ENCODE measurements at regions of chr1 and their contacts with region 1.

Region 1: DNA sequence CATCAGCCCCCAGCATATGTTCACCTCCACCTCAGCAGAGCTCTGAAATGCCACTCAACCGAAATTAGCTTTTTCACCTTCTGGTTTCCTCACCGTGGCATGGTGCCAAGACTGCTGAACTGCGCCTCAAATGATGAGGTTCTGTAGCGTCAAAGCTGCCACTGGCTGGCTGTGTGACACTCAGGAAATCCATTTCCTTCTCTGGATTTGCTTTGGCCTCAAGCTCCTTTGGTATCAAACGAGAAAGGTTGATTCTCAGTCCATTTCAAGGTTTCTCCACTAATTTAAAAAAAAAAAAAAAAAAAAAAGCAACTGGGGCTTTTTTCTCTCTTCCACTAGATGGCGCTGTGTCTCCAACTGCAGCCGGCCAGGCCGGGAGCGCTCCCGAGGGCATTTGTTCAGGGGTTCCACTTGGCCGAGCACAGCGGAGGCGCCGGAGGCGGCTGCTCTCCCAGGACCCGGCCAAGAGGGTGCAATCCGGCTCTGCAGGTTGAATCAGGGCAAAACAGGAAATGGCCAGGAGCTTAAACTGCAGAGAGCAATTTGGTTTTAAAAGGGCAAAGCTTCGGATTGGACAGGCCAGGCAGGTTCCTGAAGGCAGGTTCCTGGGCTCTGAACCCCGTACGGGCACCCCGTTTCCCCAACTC is 26.5 kb upstream of the PLA2G2C start:
- DNase-seq: peak; percentile 84
- H3K27ac ChIP-seq: no peak overlapping the region; the same call in 1 of the 2 replicates
- CTCF ChIP-seq: peak; percentile 83

Region 2: GRCh38 chr1:20095564-20096434 is 117.0 kb before region 1 on chr1:
- CTCF ChIA-PET with region 1: interaction called, 10 read pairs
- POLR2A ChIA-PET with region 1: no interaction called
- DNase-seq: no peak
- H3K27ac ChIP-seq: no peak overlapping the region
- CTCF ChIP-seq: no peak

Region 3: DNA sequence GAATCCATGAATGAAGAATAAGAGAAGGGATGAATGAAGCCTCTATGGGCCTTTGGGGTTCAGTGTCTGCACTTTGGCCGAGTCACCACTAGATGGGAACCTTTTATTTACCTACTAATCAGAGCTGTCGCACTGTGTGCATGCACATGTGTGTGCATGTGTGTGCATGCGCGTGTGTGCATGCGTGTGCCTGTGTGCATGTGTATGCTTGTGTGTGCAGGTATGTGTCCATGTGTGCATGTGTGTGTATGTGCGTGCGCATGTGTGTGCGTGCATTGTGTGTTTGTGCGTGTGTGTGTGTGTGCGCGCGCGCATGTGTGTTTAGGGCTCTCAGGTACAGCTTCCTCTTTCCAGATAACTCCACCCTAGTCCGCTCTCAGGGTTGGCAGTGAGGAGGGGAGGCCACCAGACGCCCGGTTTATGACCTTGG is 47.3 kb before region 1 on chr1:
- CTCF ChIA-PET with region 1: interaction called, 16 read pairs
- POLR2A ChIA-PET with region 1: no interaction called
- DNase-seq: peak; percentile 40
- H3K27ac ChIP-seq: no peak overlapping the region
- CTCF ChIP-seq: no peak

Region 4: DNA sequence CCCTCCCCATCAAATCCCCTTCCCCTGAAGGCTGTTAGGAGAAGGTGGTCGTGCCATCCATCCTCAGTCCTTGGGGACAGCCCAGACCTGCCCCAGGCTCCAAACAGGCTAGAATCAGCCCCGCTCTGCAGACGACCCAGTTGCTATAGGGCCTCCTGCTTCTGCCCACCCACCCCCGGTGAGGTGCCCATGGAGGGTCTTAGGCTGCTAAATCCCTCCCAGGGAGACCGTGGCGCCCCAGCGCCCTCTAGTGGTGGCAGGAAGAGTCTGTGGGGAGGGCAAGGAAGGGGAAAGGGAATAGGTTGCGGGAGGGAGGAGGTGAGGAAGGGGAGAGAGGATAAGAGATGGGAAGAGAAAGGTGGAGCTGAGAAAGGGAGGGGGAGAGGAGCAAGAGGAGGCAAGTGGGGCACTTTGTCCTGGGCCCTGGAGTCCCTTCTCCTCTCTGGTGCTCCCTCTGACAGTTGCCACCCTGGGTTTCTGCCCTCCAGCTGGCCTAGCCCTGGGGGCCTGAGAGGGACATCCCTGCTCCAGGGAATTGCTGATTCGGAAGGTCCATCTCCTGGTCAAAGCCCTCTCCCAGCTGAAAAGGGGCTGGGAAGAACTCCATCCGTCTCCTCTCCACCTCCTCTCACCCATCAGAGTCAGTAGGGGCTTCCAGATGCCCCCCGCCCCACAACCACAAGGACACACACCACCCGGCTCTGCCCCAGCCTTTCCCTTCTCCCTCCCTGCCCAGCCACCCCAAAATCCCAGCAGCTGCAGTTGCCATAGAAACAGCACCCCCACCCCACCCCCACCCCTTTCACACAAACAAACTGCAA is 217.8 kb after region 1 on chr1:
- CTCF ChIA-PET with region 1: interaction called, 16 read pairs
- POLR2A ChIA-PET with region 1: interaction called, 5 read pairs
- DNase-seq: peak; percentile 54
- H3K27ac ChIP-seq: no peak overlapping the region
- CTCF ChIP-seq: peak; percentile 69

Region 5: GRCh38 chr1:20493839-20494608 is 281.2 kb after region 1 on chr1:
- CTCF ChIA-PET with region 1: interaction called, 17 read pairs
- POLR2A ChIA-PET with region 1: no interaction called
- DNase-seq: peak; percentile 89
- H3K27ac ChIP-seq: peak overlapping the region; percentile 92
- CTCF ChIP-seq: peak; percentile 93

Measured in RWPE1 (cell line).